Mammary epithelial cell (primary cell): ENCODE measurements at regions of chr21 and their contacts with region 1.

Region 1: GRCh38 chr21:39055167-39055767 is 128.0 kb downstream of the PSMG1 start:
- DNase-seq: no peak
- H3K4me3 ChIP-seq: no peak overlapping the region
- H3K27ac ChIP-seq: no peak overlapping the region
- H3K4me1 ChIP-seq: peaks cover 14% of the 10 kb centered on the region
- H3K27me3 ChIP-seq: no peaks in the 10 kb centered on the region
- CTCF ChIP-seq: no peak

Region 2: DNA sequence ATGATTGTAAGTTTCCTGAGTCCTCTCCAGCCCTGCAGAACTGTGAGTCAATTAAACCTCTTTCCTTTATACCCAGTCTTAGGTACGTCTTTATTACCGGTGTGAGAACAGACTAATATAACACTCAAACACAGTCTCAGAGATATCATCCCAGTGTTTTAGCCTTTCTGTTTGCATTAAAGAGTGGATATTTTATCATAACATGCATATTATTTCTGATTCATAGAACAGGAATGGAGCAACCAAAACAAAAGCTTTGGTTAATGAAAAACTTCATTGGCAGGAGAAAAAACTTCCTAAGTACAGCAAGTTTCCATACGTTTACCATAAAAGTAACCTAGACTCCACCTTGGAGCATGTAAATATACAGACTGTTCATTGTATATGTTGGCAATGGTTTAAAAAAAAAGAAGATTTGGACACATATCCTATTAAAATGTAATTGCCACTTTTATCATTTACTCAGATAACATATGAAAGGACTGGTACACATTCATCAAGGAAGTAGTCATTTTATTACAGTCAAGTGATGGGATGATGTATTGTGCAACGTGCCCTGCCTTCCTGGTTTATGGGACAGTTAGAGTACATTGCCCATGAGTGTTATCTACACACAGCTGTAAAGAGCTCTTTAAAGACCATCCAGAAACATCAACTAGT is 104.7 kb before region 1 on chr21:
- CTCF ChIA-PET with region 1: no interaction called
- dilution Hi-C with region 1: loop called (anchors 5 kb)
- in situ Hi-C with region 1: no loop called
- intact Hi-C with region 1: no loop called
- DNase-seq: peak; percentile 41
- H3K4me3 ChIP-seq: no peak overlapping the region
- H3K27ac ChIP-seq: no peak overlapping the region
- H3K4me1 ChIP-seq: peaks cover 9% of the 10 kb centered on the region
- H3K27me3 ChIP-seq: no peaks in the 10 kb centered on the region
- CTCF ChIP-seq: no peak

Region 3: DNA sequence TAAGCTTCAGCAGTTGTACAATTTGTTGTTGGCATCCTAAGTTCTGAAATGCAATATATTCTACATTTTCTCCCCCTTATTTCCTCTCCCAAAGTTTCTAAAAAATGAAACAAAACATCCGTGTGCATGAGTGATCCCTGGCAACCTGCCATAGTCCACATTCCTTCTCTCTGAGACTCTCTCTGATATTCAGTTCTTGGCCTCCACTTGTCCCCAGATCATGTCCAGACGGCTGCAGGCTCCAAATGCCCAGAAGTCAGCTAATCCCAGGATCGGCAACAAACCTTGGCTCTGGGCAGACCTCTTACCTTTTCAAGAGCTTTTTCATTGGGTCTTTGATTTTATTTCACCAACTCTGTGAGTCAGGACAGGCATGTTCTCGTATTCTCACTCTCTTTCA is 61.7 kb before region 1 on chr21:
- CTCF ChIA-PET with region 1: no interaction called
- dilution Hi-C with region 1: loop called (anchors 5 kb)
- in situ Hi-C with region 1: no loop called
- intact Hi-C with region 1: loop called (anchors 1 kb)
- DNase-seq: peak; percentile 92
- H3K4me3 ChIP-seq: peak overlapping the region in 1 of 3 experiments; percentile 3
- H3K27ac ChIP-seq: peak overlapping the region; percentile 86
- H3K4me1 ChIP-seq: peaks cover 40% of the 10 kb centered on the region
- H3K27me3 ChIP-seq: no peaks in the 10 kb centered on the region
- CTCF ChIP-seq: no peak

Region 4: GRCh38 chr21:39125752-39126485 is 70.7 kb after region 1 on chr21:
- CTCF ChIA-PET with region 1: no interaction called
- dilution Hi-C with region 1: loop called (anchors 5 kb)
- in situ Hi-C with region 1: no loop called
- intact Hi-C with region 1: no loop called
- DNase-seq: peak; percentile 62
- H3K4me3 ChIP-seq: no peak overlapping the region
- H3K27ac ChIP-seq: no peak overlapping the region
- H3K4me1 ChIP-seq: no peaks in the 10 kb centered on the region
- H3K27me3 ChIP-seq: no peaks in the 10 kb centered on the region
- CTCF ChIP-seq: peak; percentile 54 to 79